Uterus (tissue), 4 donors: ENCODE measurements at regions of chr16 and their contacts with region 1.

Region 1: DNA sequence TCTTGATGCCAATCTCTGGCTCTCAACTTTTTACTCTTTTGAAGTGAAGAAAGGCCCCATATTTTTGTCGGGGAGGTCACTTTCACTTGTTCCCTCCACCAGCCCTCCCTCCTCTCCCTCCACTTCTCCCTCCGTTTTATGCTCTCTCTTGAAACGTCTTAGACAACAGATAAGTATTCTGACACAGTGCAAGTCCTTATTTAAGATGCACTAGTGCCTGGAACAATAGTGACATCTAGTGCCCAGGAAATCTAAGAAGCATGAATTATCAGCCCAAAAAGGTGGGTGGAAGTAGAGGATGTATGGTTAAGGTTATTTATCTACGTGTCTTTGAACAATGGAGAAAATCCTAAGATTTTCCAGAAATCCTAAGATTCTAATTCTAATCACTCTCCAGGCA is 17.9 kb downstream of the PSME3IP1 start:
- DNase-seq: no peak
- H3K4me3 ChIP-seq: no peak overlapping the region
- H3K27ac ChIP-seq: no peak overlapping the region
- H3K4me1 ChIP-seq: no peaks in the 10 kb centered on the region
- H3K27me3 ChIP-seq: no peaks in the 10 kb centered on the region
- CTCF ChIP-seq: peak; percentile 48 to 82 (median 63)
- POLR2A ChIP-seq: no peak

Region 2: DNA sequence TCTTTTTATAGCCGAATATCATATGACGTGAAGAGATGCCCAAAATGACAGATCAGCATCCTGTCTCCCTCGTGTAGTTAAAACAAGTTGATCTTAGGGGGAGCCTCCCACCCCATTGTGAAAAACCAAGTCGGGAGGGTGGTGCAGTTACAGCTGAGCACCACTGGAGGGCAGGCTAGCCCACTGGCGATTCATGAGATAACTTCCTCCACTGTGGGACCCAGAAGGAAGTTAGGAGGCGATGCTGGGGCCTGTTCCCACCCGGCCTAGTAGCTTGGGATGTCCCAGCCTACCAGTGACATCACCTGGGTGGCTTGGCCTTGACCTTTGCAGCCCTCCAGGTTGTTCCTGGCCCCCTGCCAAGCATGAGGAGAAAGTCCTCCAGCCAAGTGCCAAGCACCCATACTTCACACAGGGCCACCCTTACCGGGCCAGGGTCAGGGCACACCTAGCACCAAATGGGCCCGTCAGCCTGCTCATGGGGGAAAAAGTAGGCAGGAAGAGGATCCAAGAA is 83.6 kb before region 1 on chr16:
- intact Hi-C with region 1: loop called (anchors 5 kb)
- DNase-seq: peak; percentile 62 to 69
- H3K4me3 ChIP-seq: no peak overlapping the region
- H3K27ac ChIP-seq: no peak overlapping the region
- H3K4me1 ChIP-seq: no peaks in the 10 kb centered on the region
- H3K27me3 ChIP-seq: no peaks in the 10 kb centered on the region
- CTCF ChIP-seq: peak; percentile 93 to 99 (median 94)
- POLR2A ChIP-seq: no peak